ENCODE measurements at regions of chr16 and their contacts with region 1.

Region 1: DNA sequence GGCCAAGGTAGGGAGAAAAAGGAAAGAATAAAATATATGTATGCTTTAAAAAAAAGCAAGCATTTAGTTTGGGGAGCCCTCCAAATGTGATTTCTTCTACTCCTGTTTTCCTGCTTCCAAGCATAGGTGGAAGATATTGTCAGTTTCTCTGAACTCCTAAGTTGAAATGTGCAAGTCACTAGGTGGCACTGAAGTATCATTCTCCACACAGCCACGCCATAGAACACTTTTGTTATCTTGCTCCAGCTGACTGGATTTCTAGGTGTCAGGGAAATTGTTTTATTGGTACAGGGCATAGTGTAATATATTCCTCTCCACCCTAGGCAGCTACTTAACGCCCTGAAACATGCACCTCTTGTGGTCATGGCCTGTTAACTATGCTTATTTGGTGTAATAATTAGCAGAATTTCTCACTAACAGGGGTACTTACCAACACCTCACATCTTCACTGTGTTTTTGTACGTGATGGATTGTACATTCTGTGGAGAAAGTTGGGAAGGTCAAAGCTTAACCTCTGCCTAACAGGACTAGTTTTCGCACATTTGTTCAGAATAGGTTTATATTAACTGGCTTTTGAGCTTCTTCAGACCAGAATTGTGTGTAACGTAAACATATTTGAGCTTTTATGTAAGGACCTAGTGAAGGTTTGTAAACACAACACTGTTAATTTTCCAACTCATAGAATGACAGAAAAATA is 69.3 kb downstream of the FTO start:
- DNase-seq: peak in 5 of 9 donors; percentile 2 to 32 (median 25)
- ATAC-seq: no peak
- H3K4me3 ChIP-seq: no peak overlapping the region
- H3K4me3 Mint-ChIP-seq: no peak overlapping the region
- H3K27ac ChIP-seq: no peak overlapping the region
- H3K27ac Mint-ChIP-seq: no peak overlapping the region
- H3K4me1 ChIP-seq: peaks cover 0 to 4% of the 10 kb centered on the region in 2 donors
- H3K4me1 Mint-ChIP-seq: peaks cover 13 to 32% (median 26%) of the 10 kb centered on the region in 7 donors
- H3K27me3 ChIP-seq: no peaks in the 10 kb centered on the region
- H3K27me3 Mint-ChIP-seq: no peaks in the 10 kb centered on the region

Region 2: GRCh38 chr16:53822936-53823529 is 49.7 kb after region 1 on chr16:
- CTCF ChIA-PET with region 1: interaction called, 3 read pairs
- POLR2A ChIA-PET with region 1: interaction called, 3 read pairs
- intact Hi-C with region 1: loop called in 1 of 2 experiments (anchors 1 kb)
- DNase-seq: peak in 7 of 9 donors; percentile 63 to 86 (median 77)
- ATAC-seq: peak; percentile 97
- H3K4me3 ChIP-seq: no peak overlapping the region
- H3K4me3 Mint-ChIP-seq: no peak overlapping the region
- H3K27ac ChIP-seq: peak overlapping the region; percentile 47
- H3K27ac Mint-ChIP-seq: no peak overlapping the region
- H3K4me1 ChIP-seq: peaks cover 8 to 23% of the 10 kb centered on the region in 2 donors
- H3K4me1 Mint-ChIP-seq: peaks cover 0 to 19% (median 16%) of the 10 kb centered on the region in 7 donors
- H3K27me3 ChIP-seq: no peaks in the 10 kb centered on the region
- H3K27me3 Mint-ChIP-seq: no peaks in the 10 kb centered on the region

Region 3: DNA sequence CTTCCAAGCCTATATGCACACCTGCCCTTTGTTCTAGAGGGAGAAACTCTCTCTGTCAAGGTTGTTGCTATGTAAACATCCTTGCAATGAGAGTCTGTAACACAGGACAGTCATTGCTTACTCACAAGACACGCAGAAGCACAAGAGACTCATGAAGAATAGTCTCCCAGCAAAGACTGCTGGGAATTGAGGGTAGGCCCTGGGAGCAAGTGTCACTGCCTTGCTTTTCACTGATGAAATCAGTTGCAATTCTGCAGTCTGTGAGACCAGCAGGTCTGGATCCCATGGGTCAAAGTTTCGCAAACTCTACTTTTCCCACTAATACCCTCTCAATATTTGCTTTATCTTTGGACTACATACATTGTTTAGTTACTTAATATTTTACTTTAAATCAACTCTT is 108.1 kb after region 1 on chr16:
- CTCF ChIA-PET with region 1: no interaction called
- POLR2A ChIA-PET with region 1: no interaction called
- intact Hi-C with region 1: loop called in 1 of 2 experiments (anchors 10 kb)
- DNase-seq: no peak
- ATAC-seq: no peak
- H3K4me3 ChIP-seq: no peak overlapping the region
- H3K4me3 Mint-ChIP-seq: no peak overlapping the region
- H3K27ac ChIP-seq: no peak overlapping the region
- H3K27ac Mint-ChIP-seq: no peak overlapping the region
- H3K4me1 ChIP-seq: no peaks in the 10 kb centered on the region
- H3K4me1 Mint-ChIP-seq: peaks cover 0 to 6% (median 0%) of the 10 kb centered on the region in 7 donors
- H3K27me3 ChIP-seq: no peaks in the 10 kb centered on the region
- H3K27me3 Mint-ChIP-seq: no peaks in the 10 kb centered on the region

Region 4: DNA sequence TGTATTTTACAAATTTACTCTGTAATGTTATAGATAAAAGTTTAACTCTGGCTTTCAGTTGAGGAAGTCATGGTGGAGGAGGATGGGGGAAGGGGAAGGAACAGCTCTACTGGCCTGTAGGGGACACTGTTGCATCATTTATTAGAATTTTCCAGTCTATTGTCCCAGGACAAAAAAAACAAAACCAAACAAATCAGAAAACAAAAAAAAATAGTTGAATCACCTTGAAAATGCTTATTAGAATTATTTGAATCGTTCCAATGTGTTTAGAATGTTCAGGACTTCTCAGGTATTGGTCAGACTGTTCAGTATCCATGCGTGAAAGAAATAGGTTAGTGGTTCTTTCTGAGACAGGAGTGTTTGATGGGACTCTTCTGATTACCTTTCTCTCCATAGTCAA is 172.7 kb after region 1 on chr16:
- CTCF ChIA-PET with region 1: no interaction called
- POLR2A ChIA-PET with region 1: no interaction called
- intact Hi-C with region 1: loop called in 1 of 2 experiments (anchors 2 kb)
- DNase-seq: peak in 1 of 9 donors; percentile 17
- ATAC-seq: peak; percentile 52
- H3K4me3 ChIP-seq: no peak overlapping the region
- H3K4me3 Mint-ChIP-seq: no peak overlapping the region
- H3K27ac ChIP-seq: no peak overlapping the region
- H3K27ac Mint-ChIP-seq: peak overlapping the region in 1 of 9 donors; percentile 33
- H3K4me1 ChIP-seq: no peaks in the 10 kb centered on the region
- H3K4me1 Mint-ChIP-seq: peaks cover 8 to 33% (median 20%) of the 10 kb centered on the region in 7 donors
- H3K27me3 ChIP-seq: no peaks in the 10 kb centered on the region
- H3K27me3 Mint-ChIP-seq: no peaks in the 10 kb centered on the region

Region 5: GRCh38 chr16:54286090-54286993 is 513.0 kb after region 1 on chr16 and contains the start of gene IRX3:
- CTCF ChIA-PET with region 1: no interaction called
- POLR2A ChIA-PET with region 1: no interaction called
- intact Hi-C with region 1: loop called in 1 of 2 experiments (anchors 1 kb)
- DNase-seq: peak in 1 of 9 donors; percentile 41
- ATAC-seq: no peak
- H3K4me3 ChIP-seq: no peak within 1 kb of the TSS
- H3K4me3 Mint-ChIP-seq: peak within 1 kb of the TSS; percentile 38 to 90 (median 75)
- H3K27ac ChIP-seq: no peak within 1 kb of the TSS
- H3K27ac Mint-ChIP-seq: peak within 1 kb of the TSS in 1 of 9 donors; percentile 71
- H3K4me1 ChIP-seq: no peaks in the 10 kb centered on the region
- H3K4me1 Mint-ChIP-seq: peaks cover 19 to 53% (median 34%) of the 10 kb centered on the region in 7 donors
- H3K27me3 ChIP-seq: no peaks in the 10 kb centered on the region
- H3K27me3 Mint-ChIP-seq: peaks cover 47 to 78% (median 67%) of the 10 kb centered on the region in 5 donors
- total RNA-seq, gene IRX3: 3.2 TPM in 1 of 5 experiments, not detected in the others

Region 6: GRCh38 chr16:54929090-54930004 is 1156.0 kb after region 1 on chr16:
- CTCF ChIA-PET with region 1: no interaction called
- POLR2A ChIA-PET with region 1: no interaction called
- intact Hi-C with region 1: loop called in 1 of 2 experiments (anchors 10 kb)
- DNase-seq: peak; percentile 82 to 96 (median 88)
- ATAC-seq: peak; percentile 97
- H3K4me3 ChIP-seq: peak overlapping the region; percentile 70
- H3K4me3 Mint-ChIP-seq: peak overlapping the region; percentile 84 to 96 (median 93)
- H3K27ac ChIP-seq: no peak overlapping the region
- H3K27ac Mint-ChIP-seq: peak overlapping the region in 7 of 9 donors; percentile 13 to 93 (median 59)
- H3K4me1 ChIP-seq: peaks cover 9 to 12% of the 10 kb centered on the region in 2 donors
- H3K4me1 Mint-ChIP-seq: peaks cover 16 to 36% (median 32%) of the 10 kb centered on the region in 7 donors
- H3K27me3 ChIP-seq: peaks cover 8 to 47% of the 10 kb centered on the region in 2 donors
- H3K27me3 Mint-ChIP-seq: peaks cover 63 to 73% (median 68%) of the 10 kb centered on the region in 5 donors

Measured in naive thymus-derived CD4-positive, alpha-beta T cell (primary cell).